Panc1 (cell line): ENCODE measurements at regions of chr3 and their contacts with region 1.

Region 1: DNA sequence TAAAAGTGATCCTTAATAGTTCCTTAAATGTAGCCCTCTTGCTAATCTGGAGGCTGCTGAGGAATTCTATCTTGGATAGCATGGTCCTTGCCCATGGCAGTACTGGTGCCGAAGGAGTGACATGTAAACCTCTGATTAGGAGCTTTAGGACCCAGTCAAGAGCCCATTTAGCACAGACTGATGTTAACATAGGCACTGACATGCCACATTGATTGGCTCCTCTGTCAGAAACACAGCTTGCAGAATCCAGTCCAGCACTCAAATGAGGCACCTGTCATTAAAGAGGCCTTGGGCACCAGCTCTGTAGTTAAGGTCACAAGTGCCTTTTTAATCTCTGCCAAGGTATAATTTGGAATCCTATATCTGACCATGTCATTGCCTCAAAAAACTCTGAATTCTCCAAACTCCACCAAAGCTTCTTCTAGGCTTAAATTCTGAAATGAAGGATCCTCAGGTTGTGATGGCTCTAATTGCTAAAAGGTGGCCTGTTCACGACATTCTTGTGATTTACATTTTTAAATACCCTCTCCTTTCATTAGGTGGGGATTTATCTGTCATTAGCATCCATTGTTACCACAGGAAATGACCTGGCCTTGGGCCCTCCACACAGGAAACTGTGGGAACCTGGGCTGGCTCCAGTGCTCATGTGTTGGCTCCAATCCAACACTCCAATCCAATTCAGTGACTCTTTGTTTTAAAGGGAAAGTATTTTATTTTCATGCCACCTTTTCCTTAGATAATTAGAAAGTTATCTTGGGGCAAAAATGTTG is 57.3 kb upstream of the RNF7 start:
- DNase-seq: no peak
- ATAC-seq: no peak
- H3K4me3 ChIP-seq: no peak overlapping the region
- H3K27ac ChIP-seq: no peak overlapping the region
- H3K4me1 ChIP-seq: no peaks in the 10 kb centered on the region; the same call in 1 of the 2 replicates
- H3K27me3 ChIP-seq: no peaks in the 10 kb centered on the region
- CTCF ChIP-seq: no peak

Region 2: DNA sequence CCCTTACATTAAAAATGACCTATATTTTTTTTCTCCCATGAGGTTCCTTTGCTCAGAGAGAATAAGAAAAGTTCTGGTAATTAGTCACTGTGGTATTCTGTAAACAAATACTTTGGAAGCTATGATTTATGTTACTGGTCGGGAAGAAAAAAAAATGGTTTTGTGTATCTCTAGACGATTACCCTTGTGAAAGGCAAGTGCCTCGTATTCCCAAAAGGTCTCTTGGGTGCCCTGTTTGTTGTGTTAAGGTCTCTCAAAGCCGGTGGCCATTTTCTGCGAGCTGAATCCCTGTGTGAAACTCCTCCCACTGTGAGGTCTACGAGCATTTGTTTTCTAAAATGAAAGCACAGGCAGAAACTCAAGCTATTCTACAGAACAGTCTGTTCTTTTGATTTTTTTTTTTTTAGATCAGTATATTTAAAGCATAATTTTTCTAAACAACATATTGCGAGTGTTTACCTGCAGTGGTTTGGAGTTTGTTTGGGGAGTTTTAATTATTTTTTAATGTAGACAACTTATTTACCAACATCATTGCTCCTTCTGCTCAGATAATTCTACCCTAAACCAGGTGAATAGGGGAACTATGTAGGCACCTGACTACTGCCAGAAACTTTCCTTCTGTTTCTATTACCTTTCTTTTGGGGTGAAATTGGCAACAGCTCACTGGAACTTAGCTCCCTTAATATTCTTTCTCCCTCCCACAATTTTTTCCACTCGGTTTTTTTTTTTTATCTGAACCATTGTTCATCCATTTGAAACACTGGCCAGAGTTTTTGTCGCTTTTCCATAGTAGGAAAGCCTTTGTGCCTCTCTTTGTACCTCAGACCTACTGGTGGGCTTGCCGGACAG is 268.5 kb before region 1 on chr3:
- CTCF ChIA-PET with region 1: no interaction called
- POLR2A ChIA-PET with region 1: no interaction called
- in situ Hi-C with region 1: no loop called
- intact Hi-C with region 1: no loop called
- DNase-seq: no peak
- ATAC-seq: peak; percentile 68
- H3K4me3 ChIP-seq: peak overlapping the region; percentile 20 to 31
- H3K27ac ChIP-seq: peak overlapping the region; percentile 89
- H3K4me1 ChIP-seq: peaks cover 39% of the 10 kb centered on the region
- H3K27me3 ChIP-seq: no peaks in the 10 kb centered on the region
- CTCF ChIP-seq: no peak

Region 3: DNA sequence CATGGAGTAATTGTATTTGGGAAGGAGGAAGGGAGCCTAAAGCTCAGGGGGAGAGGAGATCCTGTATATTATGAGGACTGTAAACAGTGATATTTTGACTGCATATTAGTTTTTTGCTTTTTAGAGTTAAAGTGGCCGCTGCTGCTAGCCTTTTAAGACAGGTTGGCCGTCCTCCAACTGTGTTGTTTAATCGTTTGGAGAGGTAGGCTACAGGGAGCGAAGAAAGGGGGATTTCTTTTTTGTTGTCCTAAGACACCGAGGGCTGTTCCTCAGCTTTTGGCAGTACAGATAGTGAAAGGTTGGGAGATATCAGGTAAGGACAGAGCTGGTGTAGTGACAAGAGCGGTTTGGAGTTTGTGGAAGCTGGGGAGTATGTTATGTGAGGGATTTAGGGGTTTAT is 19.1 kb after region 1 on chr3:
- CTCF ChIA-PET with region 1: no interaction called
- POLR2A ChIA-PET with region 1: interaction called, 14 read pairs
- in situ Hi-C with region 1: no loop called
- intact Hi-C with region 1: no loop called
- DNase-seq: no peak
- ATAC-seq: no peak
- H3K4me3 ChIP-seq: no peak overlapping the region
- H3K27ac ChIP-seq: no peak overlapping the region
- H3K4me1 ChIP-seq: no peaks in the 10 kb centered on the region
- H3K27me3 ChIP-seq: no peaks in the 10 kb centered on the region
- CTCF ChIP-seq: no peak

Region 4: GRCh38 chr3:141876381-141876890 is 195.6 kb after region 1 on chr3 and contains the start of gene ATP1B3:
- CTCF ChIA-PET with region 1: no interaction called
- POLR2A ChIA-PET with region 1: no interaction called
- in situ Hi-C with region 1: no loop called
- intact Hi-C with region 1: no loop called
- DNase-seq: no peak
- ATAC-seq: peak; percentile 90
- H3K4me3 ChIP-seq: peak within 1 kb of the TSS; percentile 83 to 98
- H3K27ac ChIP-seq: peak within 1 kb of the TSS; percentile 95
- H3K4me1 ChIP-seq: peaks cover 11% of the 10 kb centered on the region; the same call in 1 of the 2 replicates
- H3K27me3 ChIP-seq: no peaks in the 10 kb centered on the region
- CTCF ChIP-seq: no peak
- total RNA-seq, gene ATP1B3: 201 TPM